MCF 10A (cell line): ENCODE measurements at regions of chr17 and their contacts with region 1.

Region 1: DNA sequence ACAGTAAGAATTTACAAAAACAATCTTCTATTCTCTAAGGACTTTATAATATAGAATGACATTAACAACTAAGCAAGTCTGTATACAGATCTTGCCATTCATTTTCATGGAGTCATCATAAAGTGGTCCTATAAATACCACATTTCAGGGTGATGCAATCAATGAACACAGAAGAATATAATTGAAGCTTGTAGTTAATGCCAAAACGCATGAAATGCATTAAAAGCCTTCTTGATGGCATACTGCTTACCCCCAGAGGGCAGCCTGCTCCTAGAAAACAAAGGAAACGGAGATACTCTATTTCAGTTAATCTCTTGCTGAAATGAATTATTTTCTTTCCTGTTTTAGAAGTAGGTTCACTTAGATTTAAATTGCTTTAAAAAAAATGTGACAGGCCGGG is 45.2 kb upstream of the STAC2 start:
- DNase-seq: peak; percentile 37
- H3K4me3 Mint-ChIP-seq: no peak overlapping the region
- H3K27ac Mint-ChIP-seq: no peak overlapping the region
- H3K4me1 Mint-ChIP-seq: no peaks in the 10 kb centered on the region
- H3K27me3 Mint-ChIP-seq: no peaks in the 10 kb centered on the region
- CTCF ChIP-seq: peak; percentile 47

Region 2: DNA sequence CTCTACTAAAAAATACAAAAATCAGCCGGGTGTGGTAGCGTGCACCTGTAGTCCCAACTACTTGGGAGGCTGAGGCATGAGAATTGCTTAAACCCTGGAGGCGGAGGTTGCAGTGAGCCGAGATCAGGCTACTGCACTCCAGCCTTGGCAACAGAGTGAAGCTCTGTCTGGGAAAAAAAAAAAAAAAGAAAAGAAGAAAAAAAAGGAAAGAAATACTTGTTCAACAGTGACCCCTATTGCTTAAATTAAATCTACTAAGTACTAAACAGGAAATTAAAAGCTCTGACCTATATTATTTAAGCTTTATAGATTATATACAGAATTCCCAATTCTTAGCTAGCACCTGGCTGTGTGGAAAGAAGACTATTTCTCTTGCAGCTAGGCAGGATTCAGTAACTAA is 81.6 kb after region 1 on chr17:
- CTCF ChIA-PET with region 1: interaction called, 3 read pairs
- POLR2A ChIA-PET with region 1: no interaction called
- intact Hi-C with region 1: loop called (anchors 2 kb)
- DNase-seq: no peak
- H3K4me3 Mint-ChIP-seq: no peak overlapping the region
- H3K27ac Mint-ChIP-seq: no peak overlapping the region
- H3K4me1 Mint-ChIP-seq: no peaks in the 10 kb centered on the region
- H3K27me3 Mint-ChIP-seq: no peaks in the 10 kb centered on the region
- CTCF ChIP-seq: peak; percentile 6